ENCODE measurements at regions of chr12 and their contacts with region 1.

Region 1: GRCh38 chr12:30847259-30847658 is 79.3 kb upstream of the TSPAN11 start:
- DNase-seq: peak; percentile 33 to 61
- H3K4me3 ChIP-seq: no peak overlapping the region
- H3K27ac ChIP-seq: no peak overlapping the region
- H3K4me1 ChIP-seq: peaks cover 5% of the 10 kb centered on the region; the same call in 1 of the 2 replicates
- H3K27me3 ChIP-seq: no peaks in the 10 kb centered on the region
- CTCF ChIP-seq: peak; percentile 97

Region 2: DNA sequence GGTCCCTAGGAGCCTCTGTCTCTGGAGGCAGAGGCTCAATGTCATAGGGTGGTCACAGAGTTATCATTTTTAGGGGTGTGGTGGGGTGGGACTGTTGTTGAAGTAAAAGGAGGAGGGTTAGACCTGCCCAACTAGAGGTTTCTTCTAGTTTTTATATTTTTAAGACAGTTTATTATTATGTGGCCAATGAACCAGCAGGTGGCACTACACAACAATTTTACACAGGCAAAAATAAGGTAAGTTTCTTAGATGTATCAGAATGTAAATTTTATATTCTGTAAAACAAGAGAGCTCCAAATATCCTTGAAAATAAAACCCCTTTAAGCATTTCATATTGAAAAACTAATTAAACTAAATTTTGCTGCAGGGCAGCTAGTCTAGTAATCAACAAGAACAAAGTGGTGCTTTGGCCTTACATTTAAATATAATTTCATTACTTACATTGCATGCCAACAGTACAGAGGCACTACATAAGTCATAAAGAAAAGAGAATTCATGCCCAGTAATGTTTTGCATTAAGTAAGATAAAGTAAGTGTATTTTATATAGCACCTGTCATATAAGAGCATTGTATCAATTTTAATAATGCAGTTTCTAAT is 1327.6 kb before region 1 on chr12:
- CTCF ChIA-PET with region 1: no interaction called
- POLR2A ChIA-PET with region 1: no interaction called
- intact Hi-C with region 1: loop called (anchors 2 kb)
- DNase-seq: peak in 1 of 2 experiments; percentile 24
- H3K4me3 ChIP-seq: no peak overlapping the region
- H3K27ac ChIP-seq: no peak overlapping the region
- H3K4me1 ChIP-seq: no peaks in the 10 kb centered on the region
- H3K27me3 ChIP-seq: no peaks in the 10 kb centered on the region
- CTCF ChIP-seq: peak; percentile 84

Region 3: DNA sequence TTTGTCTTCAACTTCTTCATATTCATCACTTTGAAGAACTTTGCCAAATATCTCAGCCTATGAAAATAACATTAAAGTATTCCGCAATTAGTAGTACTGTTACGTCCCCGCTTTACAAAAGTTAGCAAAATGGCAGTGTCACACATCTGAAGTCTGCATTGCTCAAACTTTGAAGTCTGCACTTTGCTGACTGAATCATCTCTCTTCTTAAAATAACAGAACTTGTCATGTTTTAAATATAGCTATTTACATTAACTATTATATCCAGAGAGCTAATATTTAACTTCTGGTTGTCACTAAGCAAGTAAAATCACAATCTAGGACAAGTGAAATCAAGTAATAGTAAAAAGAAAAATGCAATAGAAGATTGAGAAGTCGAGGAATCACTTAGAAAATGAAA is 186.0 kb before region 1 on chr12:
- CTCF ChIA-PET with region 1: no interaction called
- POLR2A ChIA-PET with region 1: no interaction called
- intact Hi-C with region 1: no loop called
- DNase-seq: no peak
- H3K4me3 ChIP-seq: no peak overlapping the region
- H3K27ac ChIP-seq: no peak overlapping the region
- H3K4me1 ChIP-seq: no peaks in the 10 kb centered on the region
- H3K27me3 ChIP-seq: no peaks in the 10 kb centered on the region
- CTCF ChIP-seq: no peak

Region 4: GRCh38 chr12:30970559-30971197 is 123.4 kb after region 1 on chr12:
- CTCF ChIA-PET with region 1: no interaction called
- POLR2A ChIA-PET with region 1: no interaction called
- intact Hi-C with region 1: loop called (anchors 5 kb)
- DNase-seq: peak; percentile 70 to 76
- H3K4me3 ChIP-seq: no peak overlapping the region
- H3K27ac ChIP-seq: no peak overlapping the region
- H3K4me1 ChIP-seq: peaks cover 32% of the 10 kb centered on the region
- H3K27me3 ChIP-seq: no peaks in the 10 kb centered on the region
- CTCF ChIP-seq: no peak

Region 5: GRCh38 chr12:31057671-31058070 is 210.4 kb after region 1 on chr12:
- CTCF ChIA-PET with region 1: interaction called, 3 read pairs
- POLR2A ChIA-PET with region 1: no interaction called
- intact Hi-C with region 1: loop called (anchors 5 kb)
- DNase-seq: no peak
- H3K4me3 ChIP-seq: no peak overlapping the region
- H3K27ac ChIP-seq: no peak overlapping the region
- H3K4me1 ChIP-seq: peaks cover 11% of the 10 kb centered on the region; the same call in 1 of the 2 replicates
- H3K27me3 ChIP-seq: no peaks in the 10 kb centered on the region
- CTCF ChIP-seq: no peak

Region 6: GRCh38 chr12:31245822-31246469 is 398.7 kb after region 1 on chr12:
- CTCF ChIA-PET with region 1: no interaction called
- POLR2A ChIA-PET with region 1: no interaction called
- intact Hi-C with region 1: loop called (anchors 1 kb)
- DNase-seq: peak in 1 of 2 experiments; percentile 33
- H3K4me3 ChIP-seq: no peak overlapping the region
- H3K27ac ChIP-seq: no peak overlapping the region
- H3K4me1 ChIP-seq: no peaks in the 10 kb centered on the region
- H3K27me3 ChIP-seq: no peaks in the 10 kb centered on the region
- CTCF ChIP-seq: no peak